Activated CD4-positive, alpha-beta memory T cell treated with anti-CD3 and anti-CD28 coated beads for 36 hours (primary cell): ENCODE measurements at regions of chr2 and their contacts with region 1.

Region 1: GRCh38 chr2:74715078-74715791 is 61.2 kb downstream of the SEMA4F start:
- DNase-seq: peak; percentile 88
- H3K4me3 Mint-ChIP-seq: peak overlapping the region; percentile 81
- H3K27ac Mint-ChIP-seq: no peak overlapping the region
- H3K4me1 Mint-ChIP-seq: peaks cover 7% of the 10 kb centered on the region
- H3K27me3 Mint-ChIP-seq: peaks cover 4% of the 10 kb centered on the region

Region 2: DNA sequence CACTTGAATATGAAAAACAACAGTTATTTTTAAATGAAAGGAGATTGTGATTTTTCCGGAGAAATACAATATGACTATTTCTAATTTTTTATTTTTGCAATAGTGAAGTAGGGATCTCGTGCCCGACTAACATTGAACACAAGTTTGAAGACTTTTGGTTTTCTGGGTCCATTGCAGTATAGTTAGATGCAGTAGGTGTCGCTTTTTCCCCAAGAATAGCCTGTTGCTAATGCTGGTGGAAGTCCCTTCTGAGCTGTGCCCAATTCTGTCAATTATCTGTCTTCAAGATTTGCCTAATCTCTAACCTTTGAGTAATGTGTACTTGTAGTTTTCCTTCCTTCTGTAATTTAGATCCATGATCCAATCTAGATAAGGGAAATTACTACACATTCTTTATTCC is 24.7 kb before region 1 on chr2:
- CTCF ChIA-PET with region 1: interaction called, 11 read pairs
- POLR2A ChIA-PET with region 1: no interaction called
- intact Hi-C with region 1: no loop called
- DNase-seq: no peak
- H3K4me3 Mint-ChIP-seq: no peak overlapping the region
- H3K27ac Mint-ChIP-seq: no peak overlapping the region
- H3K4me1 Mint-ChIP-seq: no peaks in the 10 kb centered on the region
- H3K27me3 Mint-ChIP-seq: peaks cover 2% of the 10 kb centered on the region

Region 3: DNA sequence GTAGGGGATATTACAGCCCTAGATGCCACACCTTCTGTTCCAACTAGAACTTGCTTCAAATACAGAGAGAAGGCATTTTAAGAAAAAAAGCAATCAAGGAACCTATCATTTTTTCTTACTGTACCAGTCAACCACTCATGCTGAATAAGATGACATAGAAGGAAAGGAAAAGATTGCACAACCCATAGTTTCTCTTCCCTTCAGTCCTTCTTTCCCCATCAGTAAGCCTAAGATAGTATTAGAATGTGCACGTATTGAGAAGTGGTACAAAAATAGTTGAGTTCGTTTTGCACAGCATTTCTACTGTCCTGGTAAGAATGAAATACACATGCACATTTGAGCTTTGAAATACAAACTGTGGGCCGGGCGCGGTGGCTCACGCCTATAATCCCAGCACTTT is 91.7 kb after region 1 on chr2:
- CTCF ChIA-PET with region 1: no interaction called
- POLR2A ChIA-PET with region 1: no interaction called
- intact Hi-C with region 1: no loop called
- DNase-seq: no peak
- H3K4me3 Mint-ChIP-seq: no peak overlapping the region
- H3K27ac Mint-ChIP-seq: no peak overlapping the region
- H3K4me1 Mint-ChIP-seq: no peaks in the 10 kb centered on the region
- H3K27me3 Mint-ChIP-seq: no peaks in the 10 kb centered on the region

Region 4: GRCh38 chr2:74845217-74846011 is 130.2 kb after region 1 on chr2:
- CTCF ChIA-PET with region 1: no interaction called
- POLR2A ChIA-PET with region 1: no interaction called
- intact Hi-C with region 1: loop called (anchors 2 kb)
- DNase-seq: peak; percentile 65
- H3K4me3 Mint-ChIP-seq: no peak overlapping the region
- H3K27ac Mint-ChIP-seq: peak overlapping the region; percentile 36
- H3K4me1 Mint-ChIP-seq: peaks cover 93% of the 10 kb centered on the region
- H3K27me3 Mint-ChIP-seq: no peaks in the 10 kb centered on the region

Region 5: DNA sequence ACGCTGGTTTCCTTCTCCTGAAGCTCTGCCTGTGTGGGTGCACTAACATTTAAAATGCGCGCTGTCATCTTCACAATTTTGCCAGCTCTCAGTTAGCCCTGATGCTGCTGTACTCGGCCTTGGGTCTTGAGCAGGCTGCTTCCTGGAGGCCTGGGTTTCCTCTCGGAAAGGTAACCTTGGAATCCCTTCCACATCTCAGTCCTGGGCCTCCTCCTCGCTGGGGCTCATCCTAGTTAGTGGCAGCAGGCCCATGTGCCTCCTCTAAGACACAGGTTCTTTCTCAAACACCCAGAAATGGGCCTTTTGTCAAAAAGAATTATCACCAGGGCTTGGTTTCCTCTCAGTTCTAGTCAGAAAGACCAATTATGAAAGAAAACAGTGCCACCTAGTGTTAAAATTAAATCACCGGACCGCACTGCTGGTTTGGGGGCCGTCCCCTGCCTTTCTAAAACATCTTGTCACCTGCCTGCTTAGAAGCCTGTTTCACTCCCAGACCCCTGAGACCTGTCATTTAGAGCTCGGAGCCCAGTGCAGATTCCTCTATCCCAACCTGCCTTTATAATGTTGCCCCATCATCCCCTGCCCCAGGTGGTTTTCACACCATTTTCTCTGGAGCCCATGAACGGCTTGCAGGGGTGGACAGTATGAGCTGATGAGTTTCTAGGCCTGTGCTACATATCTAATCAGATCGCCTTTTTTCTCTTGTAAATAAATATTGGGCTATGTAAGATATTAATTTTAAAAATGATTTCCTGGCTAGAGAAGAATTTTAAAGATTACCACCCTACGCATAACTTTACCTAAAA is 161.0 kb after region 1 on chr2:
- CTCF ChIA-PET with region 1: interaction called, 114 read pairs
- POLR2A ChIA-PET with region 1: no interaction called
- intact Hi-C with region 1: loop called (anchors 1 kb)
- DNase-seq: peak; percentile 59
- H3K4me3 Mint-ChIP-seq: no peak overlapping the region
- H3K27ac Mint-ChIP-seq: no peak overlapping the region
- H3K4me1 Mint-ChIP-seq: no peaks in the 10 kb centered on the region
- H3K27me3 Mint-ChIP-seq: no peaks in the 10 kb centered on the region